ENCODE measurements at regions of chr19 and their contacts with region 1.

Region 1: GRCh38 chr19:48110350-48110966 is at the start of gene PLA2G4C:
- DNase-seq: peak; percentile 90
- ATAC-seq: peak; percentile 87
- H3K4me3 Mint-ChIP-seq: peak within 1 kb of the TSS; percentile 78
- H3K27ac Mint-ChIP-seq: peak within 1 kb of the TSS; percentile 85
- H3K4me1 Mint-ChIP-seq: peaks cover 5% of the 10 kb centered on the region
- H3K27me3 Mint-ChIP-seq: no peaks in the 10 kb centered on the region
- CTCF ChIP-seq: no peak
- total RNA-seq, gene PLA2G4C: 4.2 to 6.8 TPM

Region 2: GRCh38 chr19:48095612-48096175 is 14.8 kb before region 1 on chr19:
- CTCF ChIA-PET with region 1: interaction called, 32 read pairs
- POLR2A ChIA-PET with region 1: no interaction called
- intact Hi-C with region 1: no loop called
- DNase-seq: no peak
- ATAC-seq: no peak
- H3K4me3 Mint-ChIP-seq: no peak overlapping the region
- H3K27ac Mint-ChIP-seq: no peak overlapping the region
- H3K4me1 Mint-ChIP-seq: peaks cover 2% of the 10 kb centered on the region
- H3K27me3 Mint-ChIP-seq: no peaks in the 10 kb centered on the region
- CTCF ChIP-seq: no peak

Region 3: GRCh38 chr19:48123907-48124651 is 13.6 kb after region 1 on chr19:
- CTCF ChIA-PET with region 1: interaction called, 15 read pairs
- POLR2A ChIA-PET with region 1: interaction called, 13 read pairs
- intact Hi-C with region 1: no loop called
- DNase-seq: peak; percentile 90
- ATAC-seq: peak; percentile 87
- H3K4me3 Mint-ChIP-seq: no peak overlapping the region
- H3K27ac Mint-ChIP-seq: peak overlapping the region; percentile 69
- H3K4me1 Mint-ChIP-seq: peaks cover 18% of the 10 kb centered on the region
- H3K27me3 Mint-ChIP-seq: no peaks in the 10 kb centered on the region
- CTCF ChIP-seq: peak; percentile 22

Region 4: GRCh38 chr19:48152551-48152950 is 42.1 kb after region 1 on chr19:
- CTCF ChIA-PET with region 1: interaction called, 21 read pairs
- POLR2A ChIA-PET with region 1: no interaction called
- intact Hi-C with region 1: no loop called
- DNase-seq: peak; percentile 78
- ATAC-seq: peak; percentile 74
- H3K4me3 Mint-ChIP-seq: no peak overlapping the region
- H3K27ac Mint-ChIP-seq: no peak overlapping the region
- H3K4me1 Mint-ChIP-seq: peaks cover 2% of the 10 kb centered on the region
- H3K27me3 Mint-ChIP-seq: no peaks in the 10 kb centered on the region
- CTCF ChIP-seq: peak; percentile 88

Measured in activated CD8-positive, alpha-beta T cell treated with anti-CD3 and anti-CD28 coated beads for 36 hours (primary cell).